ENCODE measurements at regions of chr7 and their contacts with region 1.

Region 1: DNA sequence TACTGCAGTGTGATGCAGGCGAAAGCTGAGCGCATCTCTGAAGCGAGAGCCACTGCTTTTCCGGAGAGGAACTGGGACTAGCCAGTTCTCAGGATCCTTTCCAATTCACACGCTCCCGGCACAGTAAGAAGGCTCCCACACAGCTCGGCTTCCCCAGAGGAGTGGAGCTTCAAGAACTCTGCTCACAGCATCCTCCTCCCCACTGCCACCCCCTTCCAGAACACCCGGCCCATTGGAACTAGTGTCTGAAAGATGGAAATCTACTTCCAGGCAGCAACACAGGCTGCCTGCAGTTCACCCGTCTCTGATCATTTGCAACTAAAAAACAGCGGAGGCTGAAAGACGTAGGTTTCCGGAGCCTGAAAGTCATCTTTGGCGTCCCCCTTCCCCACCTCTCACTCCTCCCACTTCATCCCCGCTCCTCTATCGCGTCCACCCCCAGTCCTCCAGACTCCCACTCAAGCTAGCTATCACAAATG is at the start of gene DGKB:
- DNase-seq: no peak
- ATAC-seq: peak; percentile 43
- H3K4me3 ChIP-seq: peak within 1 kb of the TSS; percentile 33; the same call in 1 of the 2 replicates
- H3K27ac ChIP-seq: no peak within 1 kb of the TSS
- H3K4me1 ChIP-seq: no peaks in the 10 kb centered on the region
- H3K27me3 ChIP-seq: no peaks in the 10 kb centered on the region
- CTCF ChIP-seq: no peak
- total RNA-seq, gene DGKB: 0.15 and 0.69 TPM in 2 replicates

Region 2: GRCh38 chr7:14875941-14876587 is 26.6 kb before region 1 on chr7:
- CTCF ChIA-PET with region 1: no interaction called
- POLR2A ChIA-PET with region 1: interaction called, 12 read pairs
- intact Hi-C with region 1: no loop called
- DNase-seq: no peak
- ATAC-seq: no peak
- H3K4me3 ChIP-seq: no peak overlapping the region
- H3K27ac ChIP-seq: no peak overlapping the region
- H3K4me1 ChIP-seq: peaks cover 4% of the 10 kb centered on the region; the same call in 1 of the 2 replicates
- H3K27me3 ChIP-seq: no peaks in the 10 kb centered on the region
- CTCF ChIP-seq: no peak

Region 3: GRCh38 chr7:15086131-15086611 is 183.5 kb after region 1 on chr7:
- CTCF ChIA-PET with region 1: no interaction called
- POLR2A ChIA-PET with region 1: no interaction called
- intact Hi-C with region 1: no loop called
- DNase-seq: no peak
- ATAC-seq: no peak
- H3K4me3 ChIP-seq: no peak overlapping the region
- H3K27ac ChIP-seq: peak overlapping the region; percentile 53
- H3K4me1 ChIP-seq: peaks cover 18% of the 10 kb centered on the region
- H3K27me3 ChIP-seq: no peaks in the 10 kb centered on the region
- CTCF ChIP-seq: no peak

Measured in PC-3 (cell line).